Calu3 (cell line): ENCODE measurements at regions of chrX and their contacts with region 1.

Region 1: DNA sequence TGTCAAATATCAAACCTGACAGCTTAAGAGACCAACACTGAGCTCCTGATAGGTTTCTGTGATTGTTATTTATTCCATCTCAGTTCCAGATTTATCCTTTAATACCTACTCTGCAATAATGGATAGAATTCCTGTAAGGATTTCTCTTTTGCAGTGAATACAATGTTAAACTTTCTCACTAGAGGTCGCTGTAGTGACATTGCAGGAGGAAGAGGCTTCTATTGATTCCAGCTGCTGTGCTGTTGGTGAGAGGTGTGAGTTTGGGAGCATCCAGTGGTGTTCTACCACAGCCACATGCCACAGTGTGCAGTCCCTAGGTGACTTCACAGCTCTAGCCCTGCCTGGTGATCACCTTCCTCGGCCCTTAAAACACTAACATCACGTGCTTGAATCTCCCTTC is 34.6 kb upstream of the DCAF8L2 start:
- DNase-seq: peak; percentile 6
- H3K4me3 Mint-ChIP-seq: no peak overlapping the region
- H3K27ac Mint-ChIP-seq: no peak overlapping the region
- H3K4me1 Mint-ChIP-seq: no peaks in the 10 kb centered on the region
- H3K27me3 Mint-ChIP-seq: no peaks in the 10 kb centered on the region
- CTCF ChIP-seq: peak; percentile 38

Region 2: GRCh38 chrX:27380163-27380845 is 175.2 kb before region 1 on chrX:
- CTCF ChIA-PET with region 1: no interaction called
- intact Hi-C with region 1: no loop called
- DNase-seq: no peak
- H3K4me3 Mint-ChIP-seq: no peak overlapping the region
- H3K27ac Mint-ChIP-seq: no peak overlapping the region
- H3K4me1 Mint-ChIP-seq: no peaks in the 10 kb centered on the region
- H3K27me3 Mint-ChIP-seq: no peaks in the 10 kb centered on the region
- CTCF ChIP-seq: no peak

Region 3: GRCh38 chrX:27619975-27620374 is 64.5 kb after region 1 on chrX:
- CTCF ChIA-PET with region 1: interaction called, 6 read pairs
- intact Hi-C with region 1: loop called (anchors 2 kb)
- DNase-seq: peak; percentile 6
- H3K4me3 Mint-ChIP-seq: no peak overlapping the region
- H3K27ac Mint-ChIP-seq: no peak overlapping the region
- H3K4me1 Mint-ChIP-seq: peaks cover 8% of the 10 kb centered on the region
- H3K27me3 Mint-ChIP-seq: no peaks in the 10 kb centered on the region
- CTCF ChIP-seq: peak; percentile 26

Region 4: DNA sequence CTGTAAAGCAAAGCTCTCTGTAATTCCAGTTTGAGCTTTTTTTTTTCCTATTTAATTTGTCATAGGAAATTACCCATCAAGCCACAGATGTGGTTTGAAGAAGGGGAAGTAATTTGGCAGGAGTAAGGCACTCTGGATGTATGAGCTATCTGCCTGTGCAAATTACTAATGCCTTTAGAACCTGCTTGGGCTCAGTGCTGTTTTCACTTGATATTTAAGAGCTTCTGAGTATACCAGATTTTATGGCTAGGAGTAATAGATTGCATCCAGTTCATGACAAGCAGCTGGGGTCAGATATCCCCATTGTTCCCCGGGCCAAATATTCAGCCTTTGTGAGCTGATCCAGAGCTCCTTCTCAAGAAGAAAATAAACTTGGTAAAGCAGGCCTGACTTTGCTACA is 123.8 kb after region 1 on chrX:
- CTCF ChIA-PET with region 1: no interaction called
- intact Hi-C with region 1: loop called (anchors 2 kb)
- DNase-seq: no peak
- H3K4me3 Mint-ChIP-seq: no peak overlapping the region
- H3K27ac Mint-ChIP-seq: no peak overlapping the region
- H3K4me1 Mint-ChIP-seq: no peaks in the 10 kb centered on the region
- H3K27me3 Mint-ChIP-seq: no peaks in the 10 kb centered on the region
- CTCF ChIP-seq: no peak